Dendritic cell treated with granulocyte-macrophage colony-stimulating factor and Interleukin-4, amounts not matched to agents 40 ng/mL and 50 ng/mL, for 4 days (primary cell): ENCODE measurements at regions of chr10 and their contacts with region 1.

Region 1: GRCh38 chr10:45249978-45250693 is 65.3 kb downstream of the OR13A1 start:
- H3K4me3 Mint-ChIP-seq: peak overlapping the region; percentile 56
- H3K27ac Mint-ChIP-seq: peak overlapping the region; percentile 64
- H3K4me1 Mint-ChIP-seq: peaks cover 25% of the 10 kb centered on the region
- H3K27me3 Mint-ChIP-seq: peaks cover 10% of the 10 kb centered on the region

Region 2: GRCh38 chr10:45135443-45136198 is 114.5 kb before region 1 on chr10:
- intact Hi-C with region 1: no loop called
- H3K4me3 Mint-ChIP-seq: no peak overlapping the region
- H3K27ac Mint-ChIP-seq: no peak overlapping the region
- H3K4me1 Mint-ChIP-seq: no peaks in the 10 kb centered on the region
- H3K27me3 Mint-ChIP-seq: no peaks in the 10 kb centered on the region

Region 3: GRCh38 chr10:45179691-45180090 is 70.4 kb before region 1 on chr10:
- intact Hi-C with region 1: no loop called
- H3K4me3 Mint-ChIP-seq: no peak overlapping the region
- H3K27ac Mint-ChIP-seq: no peak overlapping the region
- H3K4me1 Mint-ChIP-seq: no peaks in the 10 kb centered on the region
- H3K27me3 Mint-ChIP-seq: no peaks in the 10 kb centered on the region

Region 4: DNA sequence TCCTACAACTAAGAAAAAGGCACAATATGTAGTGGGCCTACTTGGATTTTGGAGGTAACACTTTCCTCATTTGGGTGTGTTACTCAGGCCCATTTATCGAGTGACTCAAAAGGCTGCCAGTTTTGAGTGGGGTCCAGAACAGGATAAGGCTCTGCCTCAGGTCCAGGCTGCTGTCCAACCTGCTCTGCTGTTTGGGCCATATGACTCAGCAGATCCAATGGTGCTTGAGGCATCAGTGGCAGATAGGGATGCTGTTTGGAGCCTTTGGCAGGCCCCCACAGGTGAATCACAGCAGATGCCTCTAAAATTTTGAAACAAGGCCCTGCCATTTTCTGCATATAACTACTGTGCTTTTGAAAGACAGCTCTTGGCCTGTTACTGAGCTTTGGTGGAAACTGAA is 89.8 kb after region 1 on chr10:
- intact Hi-C with region 1: no loop called
- H3K4me3 Mint-ChIP-seq: no peak overlapping the region
- H3K27ac Mint-ChIP-seq: no peak overlapping the region
- H3K4me1 Mint-ChIP-seq: peaks cover 16% of the 10 kb centered on the region
- H3K27me3 Mint-ChIP-seq: peaks cover 6% of the 10 kb centered on the region

Region 5: DNA sequence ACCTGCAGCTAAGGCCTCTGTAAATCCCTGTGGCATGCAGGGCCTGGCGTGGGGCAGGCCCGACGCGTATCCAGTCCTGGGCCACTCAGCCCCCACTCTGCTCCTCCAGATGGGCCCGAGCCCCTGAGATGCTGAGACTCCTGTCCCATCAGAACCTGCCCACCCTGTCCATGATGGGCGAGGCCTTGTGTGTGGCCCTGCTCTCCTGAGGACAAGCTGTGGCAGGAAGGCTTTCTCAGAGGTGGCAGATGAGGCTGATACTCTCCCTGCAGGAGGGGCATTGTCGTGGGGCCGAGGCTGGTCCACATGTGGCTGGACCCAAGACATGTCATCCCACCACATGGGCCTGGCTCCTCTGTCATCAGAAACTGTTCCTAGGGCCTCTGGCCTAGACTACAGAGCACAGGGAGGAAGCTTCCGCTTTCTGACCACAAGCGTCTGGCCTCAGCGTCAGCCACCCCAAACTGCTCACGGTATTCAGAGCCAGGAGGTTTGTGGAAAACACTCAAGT is 129.9 kb after region 1 on chr10:
- intact Hi-C with region 1: loop called (anchors 10 kb)
- H3K4me3 Mint-ChIP-seq: peak overlapping the region; percentile 37
- H3K27ac Mint-ChIP-seq: peak overlapping the region; percentile 88
- H3K4me1 Mint-ChIP-seq: peaks cover 93% of the 10 kb centered on the region
- H3K27me3 Mint-ChIP-seq: no peaks in the 10 kb centered on the region